Endothelial cell of umbilical vein (primary cell): ENCODE measurements at regions of chr1 and their contacts with region 1.

Region 1: DNA sequence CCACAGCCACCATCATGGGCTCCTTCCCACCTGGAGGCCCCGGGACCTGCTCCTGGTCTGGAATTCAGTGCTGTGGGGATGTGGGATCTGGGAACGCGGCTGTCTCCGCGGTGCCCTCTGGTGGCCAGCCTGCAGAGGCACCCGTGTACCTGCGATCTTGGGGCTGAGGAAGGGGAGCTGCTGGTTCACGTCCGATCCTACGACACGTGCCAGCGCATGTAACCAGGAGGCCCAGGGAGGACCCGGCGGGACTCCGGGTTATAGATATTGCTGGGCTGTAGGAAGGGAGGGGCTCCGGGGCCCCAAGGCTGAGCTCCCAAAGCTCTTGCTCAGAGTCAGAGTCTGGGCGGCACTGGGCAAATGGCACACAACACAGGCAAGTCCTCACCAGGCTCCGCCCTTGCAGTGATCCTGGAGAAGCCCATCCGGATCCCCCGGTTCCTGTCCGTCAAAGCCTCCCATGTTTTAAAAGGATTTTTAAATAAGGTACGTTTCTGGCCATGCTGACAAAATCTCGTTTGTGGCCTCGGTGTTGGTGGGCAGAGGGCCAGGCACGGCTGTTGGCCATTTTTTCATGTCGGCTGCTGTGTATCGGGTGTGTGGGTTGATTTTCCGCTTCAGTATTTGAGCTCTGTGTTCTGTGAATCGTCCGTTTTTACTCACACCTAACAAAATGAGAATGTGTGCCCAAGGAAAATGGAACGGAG is 20.1 kb downstream of the FAAP20 start:
- DNase-seq: peak; percentile 54
- H3K4me3 ChIP-seq: no peak overlapping the region
- H3K27ac ChIP-seq: no peak overlapping the region
- H3K4me1 ChIP-seq: no peaks in the 10 kb centered on the region
- H3K27me3 ChIP-seq: no peaks in the 10 kb centered on the region
- CTCF ChIP-seq: peak; percentile 91 to 95
- POLR2A ChIP-seq: no peak

Region 2: DNA sequence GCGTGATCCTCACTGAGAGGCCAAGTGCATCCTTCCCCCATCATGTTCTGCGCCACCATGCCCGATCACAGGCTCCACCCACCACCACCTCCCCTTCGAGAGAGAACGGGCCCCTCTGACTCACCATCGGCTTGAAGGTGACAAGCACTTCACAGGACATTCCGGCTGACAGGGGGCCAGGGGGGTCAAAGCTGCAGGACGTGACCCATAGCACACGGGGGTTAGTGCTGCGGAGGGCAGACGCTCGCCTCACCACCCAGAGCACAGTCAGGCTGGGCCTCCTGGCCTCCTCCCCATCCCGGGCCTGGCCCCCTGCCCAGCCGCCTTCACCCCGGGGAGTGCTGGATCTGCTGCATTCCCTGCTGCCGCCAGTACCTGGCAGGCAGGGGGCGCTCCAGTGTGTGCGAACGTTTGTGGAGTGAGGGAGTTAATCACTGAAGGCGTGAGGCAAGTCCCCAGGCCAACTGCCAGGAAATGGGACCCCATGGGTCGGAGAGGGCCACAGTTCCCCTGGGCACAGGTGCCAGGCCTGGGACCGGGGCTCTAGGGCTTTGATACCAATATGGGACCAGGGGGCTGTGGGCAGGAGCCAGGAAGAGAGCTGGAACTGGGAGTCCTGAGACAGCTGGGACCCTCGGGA is 214.5 kb before region 1 on chr1:
- CTCF ChIA-PET with region 1: interaction called, 20 read pairs
- POLR2A ChIA-PET with region 1: no interaction called
- dilution Hi-C with region 1: no loop called
- intact Hi-C with region 1: no loop called
- DNase-seq: peak; percentile 55
- H3K4me3 ChIP-seq: no peak overlapping the region
- H3K27ac ChIP-seq: no peak overlapping the region
- H3K4me1 ChIP-seq: no peaks in the 10 kb centered on the region
- H3K27me3 ChIP-seq: peaks cover 3% of the 10 kb centered on the region in 2 experiments
- CTCF ChIP-seq: peak; percentile 69 to 81
- POLR2A ChIP-seq: no peak

Region 3: DNA sequence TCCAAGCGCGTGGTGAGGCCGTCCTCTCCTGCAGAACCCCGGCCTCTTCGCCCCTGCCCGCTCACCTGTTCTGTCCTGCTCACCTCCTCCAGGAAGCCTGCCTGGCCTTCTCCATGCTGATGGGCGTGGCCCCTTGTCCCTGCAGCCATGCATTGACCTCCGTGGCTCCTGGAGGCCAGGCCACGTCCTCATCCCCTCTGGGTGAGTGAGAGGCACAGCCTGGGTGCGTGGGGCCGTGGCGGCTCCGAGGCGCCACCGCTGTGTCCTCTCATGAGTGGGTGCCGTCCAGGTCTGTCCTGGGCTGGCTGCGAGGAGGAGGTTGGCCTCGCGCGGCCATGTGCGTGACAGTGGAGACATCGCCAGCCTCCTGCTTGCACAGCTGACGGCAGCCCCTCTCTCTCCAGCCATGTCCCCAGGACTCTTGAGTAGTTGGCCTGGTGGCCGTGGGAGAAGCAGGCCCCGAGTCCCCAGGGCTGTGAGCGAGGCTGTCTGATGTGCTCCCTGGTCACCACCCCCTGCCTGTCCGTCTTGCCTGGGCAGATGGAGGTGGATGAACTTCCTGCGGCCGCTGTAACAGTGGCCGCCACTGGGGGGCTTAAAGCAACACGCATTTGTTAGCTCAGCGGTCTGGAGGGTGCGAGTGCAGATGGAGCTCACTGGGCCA is 66.2 kb before region 1 on chr1:
- CTCF ChIA-PET with region 1: interaction called, 13 read pairs
- POLR2A ChIA-PET with region 1: no interaction called
- dilution Hi-C with region 1: no loop called
- intact Hi-C with region 1: loop called (anchors 1 kb)
- DNase-seq: no peak
- H3K4me3 ChIP-seq: no peak overlapping the region
- H3K27ac ChIP-seq: no peak overlapping the region
- H3K4me1 ChIP-seq: no peaks in the 10 kb centered on the region
- H3K27me3 ChIP-seq: no peaks in the 10 kb centered on the region
- CTCF ChIP-seq: peak; percentile 23 to 33
- POLR2A ChIP-seq: no peak

Region 4: GRCh38 chr1:2141036-2141435 is 33.5 kb before region 1 on chr1:
- CTCF ChIA-PET with region 1: interaction called, 49 read pairs
- POLR2A ChIA-PET with region 1: no interaction called
- dilution Hi-C with region 1: no loop called
- intact Hi-C with region 1: no loop called
- DNase-seq: no peak
- H3K4me3 ChIP-seq: no peak overlapping the region
- H3K27ac ChIP-seq: no peak overlapping the region
- H3K4me1 ChIP-seq: no peaks in the 10 kb centered on the region
- H3K27me3 ChIP-seq: no peaks in the 10 kb centered on the region
- CTCF ChIP-seq: no peak
- POLR2A ChIP-seq: no peak

Region 5: DNA sequence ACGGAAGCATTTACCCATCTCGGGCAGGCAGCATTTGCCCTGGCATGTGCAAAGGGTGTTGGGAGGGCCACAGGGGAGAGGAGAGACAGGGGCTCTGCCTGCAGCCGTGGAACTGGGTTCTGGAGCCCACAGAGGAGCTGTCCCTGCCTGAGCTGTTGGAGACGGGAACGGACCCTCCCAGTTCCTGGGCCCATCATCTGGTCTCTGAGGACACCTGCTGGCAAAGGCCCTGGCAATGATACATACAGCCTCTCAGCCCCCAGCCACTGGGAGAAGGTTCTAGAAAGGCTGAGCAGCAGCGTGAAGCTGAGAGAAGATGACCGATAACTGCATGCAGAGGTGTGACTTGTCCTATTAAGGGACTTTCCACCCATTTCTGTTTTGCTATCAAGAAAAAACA is 11.3 kb before region 1 on chr1:
- CTCF ChIA-PET with region 1: interaction called, 40 read pairs
- POLR2A ChIA-PET with region 1: no interaction called
- dilution Hi-C with region 1: no loop called
- intact Hi-C with region 1: no loop called
- DNase-seq: no peak
- H3K4me3 ChIP-seq: no peak overlapping the region
- H3K27ac ChIP-seq: no peak overlapping the region
- H3K4me1 ChIP-seq: no peaks in the 10 kb centered on the region
- H3K27me3 ChIP-seq: no peaks in the 10 kb centered on the region
- CTCF ChIP-seq: no peak
- POLR2A ChIP-seq: no peak